ENCODE measurements at regions of chr1 and their contacts with region 1.

Region 1: DNA sequence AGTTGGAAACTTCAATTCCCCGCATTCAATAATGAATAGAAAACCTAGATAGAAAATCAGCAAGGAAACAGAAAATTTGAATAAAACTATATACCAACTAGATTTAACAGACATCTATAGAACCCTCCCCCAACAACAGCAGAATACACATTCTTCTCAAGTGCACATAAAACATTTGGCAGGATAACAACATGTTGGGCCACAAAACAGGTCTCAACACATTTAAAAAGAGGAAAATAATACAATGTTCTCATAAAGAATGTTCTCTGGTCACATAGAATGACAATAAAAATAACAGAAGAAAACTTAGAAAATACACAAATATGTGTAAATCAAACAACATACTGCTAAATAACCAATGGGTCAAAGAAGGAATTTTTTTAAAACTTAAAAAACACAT is 24.9 kb downstream of the ITGB3BP start:
- DNase-seq: no peak
- ATAC-seq: no peak
- H3K4me3 ChIP-seq: no peak overlapping the region
- H3K27ac ChIP-seq: no peak overlapping the region
- H3K4me1 ChIP-seq: no peaks in the 10 kb centered on the region
- H3K27me3 ChIP-seq: no peaks in the 10 kb centered on the region
- CTCF ChIP-seq: no peak
- EP300 ChIP-seq: no peak
- POLR2A ChIP-seq: no peak
- RAD21 ChIP-seq: no peak

Region 2: DNA sequence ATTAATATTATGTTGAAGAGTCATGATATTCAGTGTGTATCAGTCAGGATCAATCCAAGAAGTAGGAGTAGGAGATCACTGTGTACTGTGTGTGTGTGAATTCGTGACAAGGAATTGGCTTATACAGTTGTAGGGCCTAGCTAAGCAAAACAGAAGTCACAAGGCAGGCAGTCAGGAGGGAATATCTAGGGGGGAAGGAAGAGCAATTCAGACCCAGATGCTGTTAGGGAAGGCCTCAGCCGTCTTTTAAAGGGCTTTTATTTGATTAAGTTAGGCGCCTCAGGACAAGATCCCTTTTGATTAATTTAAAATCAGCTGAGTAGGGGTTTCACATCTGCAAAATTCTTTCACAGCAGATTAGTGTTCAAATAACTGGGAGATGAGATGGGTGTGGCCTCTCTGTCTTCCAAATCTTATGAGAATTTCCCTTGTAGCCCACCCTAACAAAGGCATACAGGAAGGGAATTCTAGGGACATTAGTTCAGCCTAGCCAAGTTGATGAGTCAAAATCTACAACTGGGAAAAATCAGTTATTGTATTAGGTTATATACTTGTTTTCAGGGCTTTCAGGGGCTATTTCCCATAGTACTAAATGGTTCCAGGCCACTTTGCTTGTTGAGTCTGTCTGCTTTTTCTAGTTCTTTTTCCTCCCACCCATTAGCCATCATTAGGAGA is 83.3 kb before region 1 on chr1:
- CTCF ChIA-PET with region 1: no interaction called
- POLR2A ChIA-PET with region 1: no interaction called
- in situ Hi-C with region 1: no loop called
- intact Hi-C with region 1: loop called (anchors 2 kb)
- DNase-seq: no peak
- ATAC-seq: no peak
- H3K4me3 ChIP-seq: no peak overlapping the region
- H3K27ac ChIP-seq: no peak overlapping the region
- H3K4me1 ChIP-seq: no peaks in the 10 kb centered on the region
- H3K27me3 ChIP-seq: no peaks in the 10 kb centered on the region
- CTCF ChIP-seq: no peak
- EP300 ChIP-seq: no peak
- POLR2A ChIP-seq: no peak
- RAD21 ChIP-seq: no peak

Region 3: GRCh38 chr1:63533931-63534330 is 35.8 kb after region 1 on chr1:
- CTCF ChIA-PET with region 1: no interaction called
- POLR2A ChIA-PET with region 1: no interaction called
- in situ Hi-C with region 1: no loop called
- intact Hi-C with region 1: no loop called
- DNase-seq: no peak
- ATAC-seq: no peak
- H3K4me3 ChIP-seq: no peak overlapping the region
- H3K27ac ChIP-seq: no peak overlapping the region
- H3K4me1 ChIP-seq: peaks cover 6% of the 10 kb centered on the region; the same call in 1 of the 2 replicates
- H3K27me3 ChIP-seq: no peaks in the 10 kb centered on the region
- CTCF ChIP-seq: no peak
- EP300 ChIP-seq: no peak
- POLR2A ChIP-seq: no peak
- RAD21 ChIP-seq: no peak

Region 4: DNA sequence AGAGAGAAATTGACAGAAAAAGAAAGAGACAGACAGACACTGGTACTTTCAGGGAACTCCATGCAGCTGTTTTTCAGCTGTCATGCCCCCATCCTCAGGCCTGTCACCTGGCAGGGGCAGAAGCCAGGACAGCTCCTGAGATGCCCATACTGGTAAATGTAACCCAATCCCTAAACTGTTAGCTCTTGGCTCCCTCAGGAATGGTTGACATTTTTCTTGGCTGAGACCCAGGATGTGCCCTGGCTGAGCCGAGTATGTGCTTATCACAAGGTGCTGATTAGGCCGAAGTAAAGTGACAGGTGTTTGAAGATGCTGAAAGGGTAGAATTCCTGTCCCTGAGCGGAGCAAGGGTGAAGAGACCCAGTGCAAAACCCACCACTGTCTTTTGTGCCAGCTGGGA is 145.8 kb after region 1 on chr1:
- CTCF ChIA-PET with region 1: no interaction called
- POLR2A ChIA-PET with region 1: no interaction called
- in situ Hi-C with region 1: no loop called
- intact Hi-C with region 1: no loop called
- DNase-seq: no peak
- ATAC-seq: no peak
- H3K4me3 ChIP-seq: no peak overlapping the region
- H3K27ac ChIP-seq: peak overlapping the region; percentile 95
- H3K4me1 ChIP-seq: peaks cover 61% of the 10 kb centered on the region
- H3K27me3 ChIP-seq: no peaks in the 10 kb centered on the region
- CTCF ChIP-seq: no peak
- EP300 ChIP-seq: no peak
- POLR2A ChIP-seq: no peak
- RAD21 ChIP-seq: no peak

Region 5: GRCh38 chr1:63688302-63688890 is 190.3 kb after region 1 on chr1:
- CTCF ChIA-PET with region 1: no interaction called
- POLR2A ChIA-PET with region 1: no interaction called
- in situ Hi-C with region 1: no loop called
- intact Hi-C with region 1: no loop called
- DNase-seq: no peak
- ATAC-seq: no peak
- H3K4me3 ChIP-seq: no peak overlapping the region
- H3K27ac ChIP-seq: no peak overlapping the region
- H3K4me1 ChIP-seq: peaks cover 26% of the 10 kb centered on the region
- H3K27me3 ChIP-seq: no peaks in the 10 kb centered on the region
- CTCF ChIP-seq: no peak
- EP300 ChIP-seq: no peak
- POLR2A ChIP-seq: no peak
- RAD21 ChIP-seq: no peak

Measured in HepG2 (cell line).